Psoas muscle (tissue), 8 donors: ENCODE measurements at regions of chr18 and their contacts with region 1.

Region 1: GRCh38 chr18:31555971-31556747 is 35.5 kb upstream of the TTR start:
- DNase-seq: no peak
- ATAC-seq: peak; percentile 65 to 88 (median 71)
- H3K4me3 ChIP-seq: no peak overlapping the region
- H3K27ac ChIP-seq: no peak overlapping the region
- H3K4me1 ChIP-seq: no peaks in the 10 kb centered on the region
- H3K27me3 ChIP-seq: no peaks in the 10 kb centered on the region
- CTCF ChIP-seq: peak; percentile 86

Region 2: GRCh38 chr18:31617031-31617717 is 61.0 kb after region 1 on chr18:
- intact Hi-C with region 1: no loop called
- DNase-seq: no peak
- ATAC-seq: no peak
- H3K4me3 ChIP-seq: no peak overlapping the region
- H3K27ac ChIP-seq: no peak overlapping the region
- H3K4me1 ChIP-seq: peaks cover 14% of the 10 kb centered on the region
- H3K27me3 ChIP-seq: peaks cover 0 to 3% (median 0%) of the 10 kb centered on the region in 3 donors
- CTCF ChIP-seq: no peak

Region 3: DNA sequence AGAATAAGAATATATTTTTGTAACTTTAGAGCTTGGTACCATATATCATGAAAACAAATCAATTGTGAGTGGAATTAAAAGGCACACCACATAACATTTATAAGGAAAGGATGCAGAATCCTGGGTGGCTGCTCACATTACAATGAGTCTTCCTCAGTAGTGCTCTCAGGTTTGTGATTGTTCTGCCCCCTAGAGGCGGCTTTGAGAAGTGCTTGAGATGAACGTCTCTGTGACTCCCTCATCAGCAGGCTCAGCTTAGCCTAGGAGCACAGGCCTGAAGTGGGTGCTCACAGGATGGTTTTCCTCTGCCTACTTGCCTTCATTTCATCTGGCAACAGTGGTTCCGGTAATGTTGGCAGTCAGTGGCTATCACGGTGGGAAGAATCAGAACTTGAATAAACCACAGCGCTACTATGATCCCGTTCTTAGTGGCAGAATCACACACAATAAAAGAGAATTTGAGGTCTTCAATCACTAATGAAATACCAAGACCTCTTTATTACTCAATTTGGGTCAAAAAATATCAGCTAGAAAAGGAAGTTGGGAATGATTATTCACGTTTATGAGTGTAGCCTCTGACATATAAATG is 166.3 kb after region 1 on chr18:
- intact Hi-C with region 1: loop called (anchors 1 to 5 kb)
- DNase-seq: peak; percentile 71 to 81
- ATAC-seq: peak; percentile 81 to 89 (median 86)
- H3K4me3 ChIP-seq: no peak overlapping the region
- H3K27ac ChIP-seq: no peak overlapping the region
- H3K4me1 ChIP-seq: peaks cover 15% of the 10 kb centered on the region
- H3K27me3 ChIP-seq: no peaks in the 10 kb centered on the region
- CTCF ChIP-seq: peak; percentile 90

Region 4: DNA sequence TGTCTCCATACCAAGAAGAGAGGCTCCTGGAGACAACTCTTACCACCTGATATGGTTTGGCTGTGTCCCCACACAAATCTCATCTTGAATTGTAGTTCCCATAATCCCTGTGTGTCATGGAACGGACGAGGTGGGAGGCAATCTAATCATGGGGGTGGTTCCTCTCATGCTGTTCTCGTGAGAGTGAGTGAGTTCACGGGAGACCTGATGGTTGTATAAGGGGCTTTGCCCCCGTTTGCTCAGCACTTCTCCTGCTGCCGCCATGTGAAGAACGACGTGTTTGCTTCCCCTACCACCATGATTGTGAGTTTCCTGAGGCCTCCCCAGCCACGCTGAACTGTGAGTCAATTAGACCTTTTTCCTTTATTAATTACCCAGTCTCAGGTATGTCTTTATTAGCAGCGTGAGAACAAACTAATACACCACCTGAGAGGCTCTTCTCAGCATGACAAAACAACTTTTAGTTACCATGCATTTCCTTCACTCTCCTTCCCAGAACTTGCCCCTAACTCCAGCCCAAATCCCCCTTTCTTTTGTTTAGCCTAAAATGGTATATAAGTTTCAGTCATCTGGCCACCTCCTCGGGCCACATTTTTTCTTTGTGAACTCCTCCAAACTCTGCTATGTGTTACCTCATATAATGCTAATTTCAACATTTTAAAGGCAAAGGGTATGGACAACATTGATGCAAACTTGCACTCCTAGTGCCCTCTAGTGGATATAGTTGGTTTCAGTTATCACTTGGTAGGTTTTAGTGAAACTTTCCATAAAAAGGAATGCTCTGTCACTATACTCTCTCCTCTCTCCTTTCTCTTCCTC is 263.2 kb after region 1 on chr18:
- intact Hi-C with region 1: loop called (anchors 2 to 5 kb)
- DNase-seq: no peak
- ATAC-seq: peak in 3 of 4 donors; percentile 44 to 85 (median 63)
- H3K4me3 ChIP-seq: no peak overlapping the region
- H3K27ac ChIP-seq: no peak overlapping the region
- H3K4me1 ChIP-seq: no peaks in the 10 kb centered on the region
- H3K27me3 ChIP-seq: no peaks in the 10 kb centered on the region
- CTCF ChIP-seq: peak; percentile 76

Region 5: DNA sequence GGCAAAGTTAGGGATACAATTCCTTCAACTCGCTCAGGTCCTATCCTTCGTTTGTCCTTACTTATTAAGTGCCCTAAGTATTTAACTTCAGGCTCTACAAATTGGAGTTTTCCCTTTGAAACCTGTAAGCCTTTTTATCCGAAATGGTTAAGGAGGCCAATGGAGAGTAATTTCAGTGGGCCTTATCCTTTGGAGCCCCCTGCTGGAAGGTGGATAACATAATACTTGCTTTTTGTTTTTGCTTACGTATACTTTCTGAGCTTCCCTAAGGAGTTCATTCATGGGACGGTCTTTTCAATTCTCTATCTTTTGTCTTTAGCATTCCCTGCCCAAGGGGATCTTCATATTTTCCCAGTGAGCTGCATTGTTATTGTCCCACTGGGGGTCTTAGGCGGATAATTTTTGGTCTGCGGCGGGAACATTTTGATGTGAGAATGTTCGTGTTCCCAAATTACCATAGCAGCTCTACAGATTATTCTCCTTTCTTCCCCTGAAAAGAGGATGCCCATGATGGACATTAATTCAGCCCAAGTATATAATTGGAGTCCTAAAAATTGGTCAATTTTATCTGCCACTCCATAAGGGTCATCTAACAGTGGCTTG is 421.2 kb after region 1 on chr18:
- intact Hi-C with region 1: loop called (anchors 2 to 5 kb)
- DNase-seq: no peak
- ATAC-seq: peak in 3 of 4 donors; percentile 71 to 93 (median 77)
- H3K4me3 ChIP-seq: no peak overlapping the region
- H3K27ac ChIP-seq: no peak overlapping the region
- H3K4me1 ChIP-seq: no peaks in the 10 kb centered on the region
- H3K27me3 ChIP-seq: no peaks in the 10 kb centered on the region
- CTCF ChIP-seq: peak; percentile 73